Calu3 (cell line): ENCODE measurements at regions of chr14 and their contacts with region 1.

Region 1: GRCh38 chr14:60628892-60629291 is 20.4 kb downstream of the SIX1 start:
- DNase-seq: no peak
- H3K4me3 Mint-ChIP-seq: no peak overlapping the region
- H3K27ac Mint-ChIP-seq: no peak overlapping the region
- H3K4me1 Mint-ChIP-seq: peaks cover 10% of the 10 kb centered on the region
- H3K27me3 Mint-ChIP-seq: no peaks in the 10 kb centered on the region
- CTCF ChIP-seq: no peak

Region 2: GRCh38 chr14:61196792-61197191 is 567.9 kb after region 1 on chr14:
- CTCF ChIA-PET with region 1: no interaction called
- intact Hi-C with region 1: loop called (anchors 5 kb)
- DNase-seq: peak; percentile 4
- H3K4me3 Mint-ChIP-seq: no peak overlapping the region
- H3K27ac Mint-ChIP-seq: no peak overlapping the region
- H3K4me1 Mint-ChIP-seq: no peaks in the 10 kb centered on the region
- H3K27me3 Mint-ChIP-seq: no peaks in the 10 kb centered on the region
- CTCF ChIP-seq: no peak